CD8-positive, alpha-beta T cell (primary cell): ENCODE measurements at regions of chr10 and their contacts with region 1.

Region 1: DNA sequence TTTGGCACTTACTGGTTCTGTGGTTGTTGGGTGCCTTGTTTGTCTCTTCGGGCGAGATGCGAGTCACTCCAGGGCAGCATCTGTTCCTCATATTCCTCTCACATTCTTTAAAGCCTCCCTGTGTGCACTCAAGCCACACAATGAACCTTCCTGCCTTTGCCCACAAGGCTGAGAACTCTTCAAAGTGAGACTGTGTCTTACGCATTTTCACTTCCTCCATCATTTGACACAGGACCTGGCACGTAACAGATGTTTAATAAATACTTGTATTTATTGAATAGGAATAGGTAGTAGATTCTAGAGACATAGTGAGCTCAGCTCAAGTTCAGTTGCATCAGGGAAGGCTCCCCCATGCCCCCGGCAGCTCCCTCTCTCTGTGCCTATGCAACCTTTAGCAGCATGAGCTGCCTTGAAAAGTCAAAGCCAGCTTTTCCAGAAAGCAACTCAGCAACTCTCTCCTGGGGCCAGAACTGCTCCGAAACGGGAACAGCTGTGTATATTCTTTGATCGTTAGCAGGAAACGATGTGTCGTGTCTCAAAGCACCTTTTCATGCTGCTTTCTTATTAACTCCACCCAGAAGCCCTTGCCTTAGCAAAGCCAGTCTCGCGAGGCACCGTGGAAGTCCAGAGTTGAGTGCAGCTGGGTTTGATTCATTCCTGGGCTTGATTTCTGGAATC is 97.5 kb downstream of the PFKFB3 start:
- DNase-seq: peak in 8 of 9 experiments; percentile 6 to 82 (median 47)
- ATAC-seq: peak; percentile 82
- H3K4me3 ChIP-seq: no peak overlapping the region
- H3K4me3 Mint-ChIP-seq: peak overlapping the region; percentile 54
- H3K27ac ChIP-seq: peak overlapping the region in 1 of 2 experiments; percentile 1
- H3K27ac Mint-ChIP-seq: peak overlapping the region; percentile 91
- H3K4me1 ChIP-seq: peaks cover 17% of the 10 kb centered on the region
- H3K4me1 Mint-ChIP-seq: peaks cover 26% of the 10 kb centered on the region
- H3K27me3 ChIP-seq: no peaks in the 10 kb centered on the region
- H3K27me3 Mint-ChIP-seq: no peaks in the 10 kb centered on the region
- CTCF ChIP-seq: no peak

Region 2: DNA sequence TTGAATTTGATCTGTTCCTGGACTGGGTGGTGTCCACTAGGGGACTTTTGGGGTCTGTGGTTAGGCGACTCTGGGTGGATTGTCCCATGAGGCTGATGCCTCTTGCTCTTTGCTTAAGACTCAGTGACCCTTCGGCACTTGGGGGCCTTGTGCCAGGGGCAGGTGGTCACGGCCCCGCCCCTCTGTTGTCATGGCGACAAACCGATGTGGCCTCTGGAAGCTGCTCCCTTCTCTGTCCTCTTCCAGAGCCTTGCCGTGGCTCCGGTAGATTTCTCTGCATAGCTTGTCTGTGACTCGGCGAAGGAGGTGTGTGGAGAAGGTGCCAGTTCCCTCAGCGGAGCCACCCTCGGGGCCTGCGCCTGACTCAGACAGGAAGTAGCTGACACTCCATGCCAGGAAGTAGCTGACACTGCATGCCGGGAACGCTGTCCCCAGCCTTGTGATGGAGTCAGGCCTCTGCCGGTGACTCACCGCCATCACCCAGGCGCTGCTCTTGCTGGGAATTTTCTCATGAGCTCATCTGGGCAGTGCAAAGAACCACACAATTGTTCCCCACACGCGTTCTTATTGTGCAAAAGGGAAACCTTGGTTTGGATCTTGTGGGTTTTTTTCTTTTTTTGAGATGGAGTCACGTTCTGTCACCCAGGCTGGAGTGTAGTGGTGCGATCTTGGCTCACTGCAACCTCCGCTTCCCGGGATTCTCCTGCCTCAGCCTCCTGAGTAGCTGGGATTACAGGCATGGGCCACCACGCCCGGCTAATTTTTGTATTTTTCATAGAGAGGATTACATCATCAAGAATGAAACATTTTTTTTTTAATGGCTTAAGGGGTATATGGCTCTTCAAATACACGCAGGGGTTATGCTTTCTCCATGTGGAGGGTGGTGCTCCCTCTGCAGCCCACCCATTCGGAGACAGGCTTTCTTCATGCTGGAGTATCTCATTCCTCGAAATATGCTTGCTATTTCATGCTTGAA is 24.9 kb before region 1 on chr10:
- CTCF ChIA-PET with region 1: no interaction called
- POLR2A ChIA-PET with region 1: interaction called, 3 read pairs
- intact Hi-C with region 1: loop called in 1 of 2 experiments (anchors 2 kb)
- DNase-seq: peak; percentile 73 to 97 (median 84)
- ATAC-seq: peak; percentile 86
- H3K4me3 ChIP-seq: peak overlapping the region in 1 of 2 experiments; percentile 37
- H3K4me3 Mint-ChIP-seq: peak overlapping the region; percentile 61
- H3K27ac ChIP-seq: peak overlapping the region; percentile 39 to 86
- H3K27ac Mint-ChIP-seq: peak overlapping the region; percentile 92
- H3K4me1 ChIP-seq: peaks cover 31% of the 10 kb centered on the region
- H3K4me1 Mint-ChIP-seq: peaks cover 42% of the 10 kb centered on the region
- H3K27me3 ChIP-seq: no peaks in the 10 kb centered on the region
- H3K27me3 Mint-ChIP-seq: no peaks in the 10 kb centered on the region
- CTCF ChIP-seq: no peak

Region 3: DNA sequence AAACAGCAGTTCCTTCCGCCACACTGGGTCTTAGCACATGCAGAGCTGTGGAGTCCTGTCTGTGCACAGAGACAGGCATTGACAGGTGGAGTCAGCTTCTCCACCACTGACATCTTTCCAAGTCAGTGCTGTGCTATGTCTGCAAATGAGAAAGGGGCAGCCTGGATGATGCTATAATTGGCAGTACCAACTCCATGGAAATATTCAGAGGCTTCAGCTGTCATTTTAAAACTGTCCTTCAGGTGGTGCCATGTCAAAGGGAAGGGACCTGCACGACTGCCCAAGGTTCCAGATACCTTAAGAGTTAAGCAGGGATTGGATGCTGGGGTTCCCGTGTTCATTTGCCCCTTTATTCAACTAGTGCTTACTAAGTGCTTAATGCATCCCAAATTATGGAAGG is 537.9 kb after region 1 on chr10:
- CTCF ChIA-PET with region 1: no interaction called
- POLR2A ChIA-PET with region 1: no interaction called
- intact Hi-C with region 1: no loop called
- DNase-seq: peak in 2 of 9 experiments; percentile 17 to 29
- ATAC-seq: no peak
- H3K4me3 ChIP-seq: no peak overlapping the region
- H3K4me3 Mint-ChIP-seq: no peak overlapping the region
- H3K27ac ChIP-seq: no peak overlapping the region
- H3K27ac Mint-ChIP-seq: no peak overlapping the region
- H3K4me1 ChIP-seq: no peaks in the 10 kb centered on the region
- H3K4me1 Mint-ChIP-seq: no peaks in the 10 kb centered on the region
- H3K27me3 ChIP-seq: no peaks in the 10 kb centered on the region
- H3K27me3 Mint-ChIP-seq: peaks cover 2% of the 10 kb centered on the region
- CTCF ChIP-seq: no peak